Activated CD4-positive, alpha-beta T cell treated with anti-CD3 and anti-CD28 coated beads for 36 hours (primary cell): ENCODE measurements at regions of chr14 and their contacts with region 1.

Region 1: DNA sequence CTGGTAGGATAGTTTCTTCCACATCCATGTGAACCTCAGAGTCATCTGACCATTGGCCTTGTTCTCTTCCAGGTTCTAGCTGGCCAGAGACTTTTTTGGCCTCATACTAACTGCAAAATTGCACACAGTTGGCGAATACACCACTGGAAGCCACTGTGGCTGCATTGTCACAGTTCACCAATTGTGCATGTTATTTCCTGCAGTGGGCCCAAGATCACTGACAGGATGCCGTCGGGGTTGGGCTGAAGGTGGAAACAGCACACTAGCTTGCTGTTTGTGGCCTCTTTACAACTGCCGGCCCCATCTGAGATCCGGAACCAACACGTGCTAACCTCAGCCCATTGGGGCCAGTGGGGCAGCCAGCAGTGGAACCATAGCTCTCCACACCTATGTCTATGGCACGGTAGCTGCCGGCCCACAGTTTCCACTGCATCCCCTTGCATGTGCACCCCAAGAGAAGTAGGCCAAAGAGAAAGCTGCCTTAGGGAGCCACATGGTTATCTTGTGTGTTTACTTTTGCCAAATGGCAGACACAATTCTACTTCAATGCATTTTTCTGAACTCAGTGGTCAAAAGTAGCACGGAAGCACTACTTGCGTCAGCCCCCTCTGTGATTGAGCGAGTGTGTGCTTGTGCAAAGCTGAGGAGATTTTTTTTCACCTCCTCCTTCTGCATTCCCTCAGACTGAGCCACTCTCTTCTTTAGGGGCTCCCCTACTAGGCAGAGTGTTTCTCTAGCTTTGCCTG is 464.0 kb downstream of the RAD51B start:
- DNase-seq: peak; percentile 66
- ATAC-seq: peak; percentile 28
- H3K4me3 Mint-ChIP-seq: no peak overlapping the region
- H3K27ac Mint-ChIP-seq: peak overlapping the region; percentile 72
- H3K4me1 Mint-ChIP-seq: peaks cover 86% of the 10 kb centered on the region
- H3K27me3 Mint-ChIP-seq: no peaks in the 10 kb centered on the region

Region 2: DNA sequence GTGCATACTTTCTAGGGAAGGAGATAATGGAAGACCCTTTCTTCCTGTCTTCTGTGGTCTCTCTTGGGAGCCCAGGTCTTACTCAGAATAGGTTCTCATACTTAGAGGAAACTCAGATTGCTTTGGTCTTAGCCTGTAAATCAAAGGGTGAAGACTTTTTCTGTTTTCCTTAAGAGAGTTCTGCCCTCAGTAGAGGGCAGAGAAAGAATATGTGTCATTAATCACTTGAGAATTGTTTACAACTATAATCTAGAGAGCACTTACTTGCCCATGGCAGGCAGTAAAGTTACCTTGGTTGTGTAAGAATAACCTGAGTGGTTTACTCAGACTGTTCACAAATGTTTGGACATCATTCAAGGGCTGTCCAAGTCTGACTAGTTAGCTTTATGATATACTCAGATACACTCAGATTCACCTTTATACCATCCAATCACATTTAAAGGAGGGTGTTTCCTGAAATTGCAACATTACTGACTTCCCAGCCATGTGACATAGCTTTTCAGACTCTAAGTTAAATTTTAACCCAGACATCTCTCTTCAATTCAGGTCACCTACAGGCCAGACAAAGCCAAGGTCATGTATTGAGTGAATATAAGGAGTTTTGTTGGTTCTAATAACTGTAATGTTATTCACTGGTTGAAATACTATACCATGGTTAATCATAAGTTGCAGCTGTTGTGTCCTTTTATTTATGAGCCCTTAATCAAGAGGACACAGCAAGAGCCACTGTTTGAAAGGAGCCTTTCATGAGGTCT is 91.8 kb before region 1 on chr14:
- CTCF ChIA-PET with region 1: no interaction called
- POLR2A ChIA-PET with region 1: no interaction called
- intact Hi-C with region 1: no loop called
- DNase-seq: no peak
- ATAC-seq: no peak
- H3K4me3 Mint-ChIP-seq: no peak overlapping the region
- H3K27ac Mint-ChIP-seq: no peak overlapping the region
- H3K4me1 Mint-ChIP-seq: no peaks in the 10 kb centered on the region
- H3K27me3 Mint-ChIP-seq: no peaks in the 10 kb centered on the region

Region 3: DNA sequence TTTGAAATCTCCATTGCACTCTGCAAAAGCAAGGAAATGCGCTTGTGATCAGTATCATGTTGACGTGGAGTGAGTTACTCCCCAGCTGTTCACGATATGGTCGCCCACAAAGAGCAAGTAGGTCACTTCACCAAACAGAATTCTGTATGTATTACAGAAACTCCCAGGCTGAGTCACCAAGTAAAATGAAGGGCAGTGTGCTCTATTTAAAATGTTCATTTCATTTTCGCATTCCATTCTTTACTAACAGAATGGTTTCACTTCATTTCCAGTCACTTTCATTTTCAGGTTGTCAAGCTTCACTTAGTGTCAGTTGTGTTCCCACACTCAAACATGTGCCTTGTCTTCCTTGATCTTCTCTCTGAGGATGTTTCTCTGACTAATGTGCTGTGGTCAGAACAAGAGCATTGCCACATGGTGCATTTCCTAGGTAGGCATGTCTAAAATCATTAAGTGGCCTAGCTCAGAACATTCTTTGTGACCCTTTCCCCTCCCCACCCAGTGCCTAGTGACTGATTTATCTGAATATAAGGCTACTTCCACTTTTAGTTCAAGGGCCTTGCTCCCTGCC is 72.7 kb before region 1 on chr14:
- CTCF ChIA-PET with region 1: no interaction called
- POLR2A ChIA-PET with region 1: no interaction called
- intact Hi-C with region 1: loop called in 1 of 2 experiments (anchors 2 kb)
- DNase-seq: peak; percentile 71
- ATAC-seq: peak; percentile 93
- H3K4me3 Mint-ChIP-seq: peak overlapping the region; percentile 43
- H3K27ac Mint-ChIP-seq: peak overlapping the region; percentile 84
- H3K4me1 Mint-ChIP-seq: peaks cover 53% of the 10 kb centered on the region
- H3K27me3 Mint-ChIP-seq: no peaks in the 10 kb centered on the region

Region 4: DNA sequence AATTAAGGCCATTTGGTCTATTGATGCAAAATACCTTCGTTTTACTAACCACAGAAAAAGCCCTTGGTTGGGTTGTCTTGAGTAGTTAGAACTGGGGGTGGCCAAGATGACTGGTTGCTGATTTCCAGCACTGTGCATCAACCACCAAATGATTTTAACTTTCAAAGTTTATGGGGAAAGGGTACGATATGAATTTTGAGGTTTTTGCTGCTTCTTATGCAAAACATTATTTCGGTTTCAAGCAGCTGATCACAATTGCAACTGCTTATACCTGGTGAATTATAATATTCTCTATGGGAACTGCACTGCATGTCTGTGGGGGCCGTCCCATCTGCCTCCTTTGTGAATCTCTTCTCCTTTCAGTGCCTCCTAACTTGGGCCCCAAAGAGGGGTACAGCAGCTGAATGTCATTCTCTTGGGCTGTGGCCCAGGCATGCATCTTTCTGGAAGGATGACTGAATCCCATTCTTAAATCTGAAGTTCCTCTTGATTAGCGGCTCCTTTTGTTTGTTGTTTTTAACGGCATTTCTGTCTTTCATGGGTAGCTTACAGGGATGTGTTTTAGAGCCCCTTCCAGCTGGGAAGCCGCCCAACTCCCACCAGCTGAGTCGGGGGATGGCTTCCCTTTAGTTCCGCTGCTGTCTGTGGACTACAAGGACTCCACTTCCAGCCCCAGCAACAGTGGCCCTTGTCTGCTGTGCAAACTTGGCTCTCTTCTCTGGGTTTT is 29.5 kb after region 1 on chr14:
- CTCF ChIA-PET with region 1: interaction called, 3 read pairs
- POLR2A ChIA-PET with region 1: no interaction called
- intact Hi-C with region 1: loop called (anchors 2 kb)
- DNase-seq: peak; percentile 71
- ATAC-seq: peak; percentile 93
- H3K4me3 Mint-ChIP-seq: no peak overlapping the region
- H3K27ac Mint-ChIP-seq: no peak overlapping the region
- H3K4me1 Mint-ChIP-seq: peaks cover 30% of the 10 kb centered on the region
- H3K27me3 Mint-ChIP-seq: no peaks in the 10 kb centered on the region

Region 5: DNA sequence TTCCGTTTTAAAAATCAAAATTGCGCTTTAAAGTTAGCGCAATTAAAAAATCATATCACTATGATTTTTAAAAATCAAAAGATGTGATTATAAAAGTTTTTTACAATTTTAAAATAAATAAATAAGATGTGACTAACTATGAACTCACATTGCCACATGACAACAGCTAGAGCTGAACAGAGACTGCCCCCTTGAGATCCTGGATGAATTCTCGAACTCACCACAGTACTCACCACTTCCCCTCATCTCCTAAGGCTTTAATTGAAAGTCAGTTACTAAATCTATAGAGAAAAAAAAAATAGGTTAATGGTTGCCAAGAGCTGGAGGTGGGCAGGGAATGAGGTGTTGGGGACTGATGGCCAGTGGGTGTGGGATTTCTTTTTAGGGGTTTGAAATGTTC is 125.1 kb after region 1 on chr14:
- CTCF ChIA-PET with region 1: no interaction called
- POLR2A ChIA-PET with region 1: no interaction called
- intact Hi-C with region 1: loop called in 1 of 2 experiments (anchors 10 kb)
- DNase-seq: no peak
- ATAC-seq: no peak
- H3K4me3 Mint-ChIP-seq: no peak overlapping the region
- H3K27ac Mint-ChIP-seq: no peak overlapping the region
- H3K4me1 Mint-ChIP-seq: peaks cover 34% of the 10 kb centered on the region
- H3K27me3 Mint-ChIP-seq: no peaks in the 10 kb centered on the region

Region 6: GRCh38 chr14:68685419-68686204 is 402.1 kb after region 1 on chr14:
- CTCF ChIA-PET with region 1: interaction called, 4 read pairs
- POLR2A ChIA-PET with region 1: no interaction called
- intact Hi-C with region 1: loop called in 1 of 2 experiments (anchors 5 kb)
- DNase-seq: peak; percentile 86
- ATAC-seq: peak; percentile 87
- H3K4me3 Mint-ChIP-seq: peak overlapping the region; percentile 31
- H3K27ac Mint-ChIP-seq: peak overlapping the region; percentile 81
- H3K4me1 Mint-ChIP-seq: peaks cover 57% of the 10 kb centered on the region
- H3K27me3 Mint-ChIP-seq: no peaks in the 10 kb centered on the region